Activated CD8-positive, alpha-beta T cell treated with anti-CD3 and anti-CD28 coated beads for 36 hours (primary cell): ENCODE measurements at regions of chr12 and their contacts with region 1.

Region 1: GRCh38 chr12:111396726-111397445 is 8.8 kb upstream of the SH2B3 start:
- DNase-seq: peak; percentile 89
- ATAC-seq: peak; percentile 75
- H3K4me3 Mint-ChIP-seq: peak overlapping the region; percentile 70
- H3K27ac Mint-ChIP-seq: peak overlapping the region; percentile 87
- H3K4me1 Mint-ChIP-seq: peaks cover 36% of the 10 kb centered on the region
- H3K27me3 Mint-ChIP-seq: no peaks in the 10 kb centered on the region
- CTCF ChIP-seq: peak; percentile 99

Region 2: DNA sequence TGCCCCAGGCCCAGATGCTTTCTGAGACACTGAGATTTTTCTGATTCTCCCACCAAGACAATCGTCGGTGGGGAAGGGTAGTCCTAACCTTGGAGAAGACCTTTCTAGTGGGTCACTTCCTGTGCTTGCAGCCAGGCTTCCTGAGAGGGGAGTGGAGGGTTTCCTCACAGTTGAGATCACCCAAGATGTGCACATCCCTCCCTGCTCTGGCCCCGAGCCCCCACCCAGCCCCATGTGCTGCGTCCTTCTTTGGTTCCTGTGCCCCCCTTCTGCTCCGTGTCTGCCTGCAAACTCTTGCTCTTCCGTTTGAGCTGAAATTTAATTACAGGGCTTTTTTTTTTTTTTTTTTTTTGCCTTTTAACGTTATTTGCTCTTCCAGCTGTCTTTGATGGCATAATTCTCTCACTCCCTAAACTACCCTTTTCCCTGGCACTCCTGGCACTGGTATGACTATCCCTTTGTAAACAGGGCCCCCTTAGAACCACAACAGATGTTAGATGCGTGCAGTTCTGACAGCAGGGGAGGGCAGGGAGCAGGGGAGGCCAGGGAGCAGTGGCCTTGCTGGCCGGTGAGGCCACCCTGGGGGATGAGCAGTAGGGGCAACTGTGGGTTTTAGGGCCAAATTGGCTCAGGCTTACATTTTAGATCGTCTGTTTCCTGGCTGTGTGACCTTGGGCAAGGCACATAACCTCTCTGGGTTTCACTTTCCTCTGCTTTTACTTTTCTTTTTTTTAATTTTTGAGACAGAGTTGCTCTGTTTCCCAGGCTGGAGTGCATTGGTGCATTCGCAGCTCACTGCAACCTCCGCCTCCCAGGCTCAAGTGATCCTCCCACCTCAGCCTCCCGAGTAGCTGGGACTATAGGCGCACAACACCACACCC is 172.5 kb before region 1 on chr12:
- CTCF ChIA-PET with region 1: no interaction called
- POLR2A ChIA-PET with region 1: no interaction called
- intact Hi-C with region 1: no loop called
- DNase-seq: no peak
- ATAC-seq: no peak
- H3K4me3 Mint-ChIP-seq: no peak overlapping the region
- H3K27ac Mint-ChIP-seq: no peak overlapping the region
- H3K4me1 Mint-ChIP-seq: no peaks in the 10 kb centered on the region
- H3K27me3 Mint-ChIP-seq: no peaks in the 10 kb centered on the region
- CTCF ChIP-seq: no peak

Region 3: GRCh38 chr12:111330800-111331752 is 65.8 kb before region 1 on chr12:
- CTCF ChIA-PET with region 1: interaction called, 15 read pairs
- POLR2A ChIA-PET with region 1: no interaction called
- intact Hi-C with region 1: no loop called
- DNase-seq: no peak
- ATAC-seq: peak; percentile 68
- H3K4me3 Mint-ChIP-seq: no peak overlapping the region
- H3K27ac Mint-ChIP-seq: no peak overlapping the region
- H3K4me1 Mint-ChIP-seq: no peaks in the 10 kb centered on the region
- H3K27me3 Mint-ChIP-seq: peaks cover 7% of the 10 kb centered on the region
- CTCF ChIP-seq: peak; percentile 61

Region 4: DNA sequence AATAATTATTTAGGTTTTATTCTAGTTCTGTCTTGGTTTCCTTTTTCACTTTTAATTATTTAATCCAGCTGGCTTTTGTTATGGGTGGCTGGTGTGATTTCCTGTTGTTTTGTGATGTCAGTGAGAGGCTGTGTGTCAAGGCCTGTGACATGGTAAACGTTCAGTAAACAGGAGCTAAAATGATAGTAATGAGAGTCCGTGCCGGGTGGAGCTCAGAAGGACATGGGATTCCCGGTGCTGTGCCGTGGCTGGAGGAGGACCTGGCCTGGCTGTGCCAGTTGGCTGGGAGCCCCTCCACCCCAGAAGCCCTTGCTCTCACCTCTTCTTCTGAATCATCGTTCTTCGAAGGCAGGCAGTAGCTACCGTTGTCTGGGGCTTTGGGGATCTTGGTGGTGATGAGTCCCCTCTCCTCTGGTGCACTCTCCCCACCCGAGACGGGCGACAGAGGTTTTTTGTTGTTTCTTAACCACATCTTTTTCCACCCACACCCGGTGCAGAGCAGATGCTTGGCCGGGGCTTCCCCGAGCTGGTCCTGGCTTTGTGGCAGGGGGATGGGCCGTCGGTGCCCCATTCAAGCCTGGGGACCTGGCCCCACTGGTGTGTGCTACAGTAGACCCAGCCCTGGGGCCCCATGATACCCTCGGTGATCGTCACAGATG is 37.9 kb after region 1 on chr12:
- CTCF ChIA-PET with region 1: interaction called, 1,222 read pairs
- POLR2A ChIA-PET with region 1: interaction called, 89 read pairs
- intact Hi-C with region 1: loop called (anchors 5 kb)
- DNase-seq: peak; percentile 94
- ATAC-seq: peak; percentile 73
- H3K4me3 Mint-ChIP-seq: peak overlapping the region; percentile 62
- H3K27ac Mint-ChIP-seq: peak overlapping the region; percentile 95
- H3K4me1 Mint-ChIP-seq: peaks cover 86% of the 10 kb centered on the region
- H3K27me3 Mint-ChIP-seq: no peaks in the 10 kb centered on the region
- CTCF ChIP-seq: no peak

Region 5: GRCh38 chr12:111462210-111462769 is 65.4 kb after region 1 on chr12:
- CTCF ChIA-PET with region 1: interaction called, 1,222 read pairs
- POLR2A ChIA-PET with region 1: interaction called, 4 read pairs
- intact Hi-C with region 1: no loop called
- DNase-seq: no peak
- ATAC-seq: no peak
- H3K4me3 Mint-ChIP-seq: no peak overlapping the region
- H3K27ac Mint-ChIP-seq: no peak overlapping the region
- H3K4me1 Mint-ChIP-seq: peaks cover 1% of the 10 kb centered on the region
- H3K27me3 Mint-ChIP-seq: no peaks in the 10 kb centered on the region
- CTCF ChIP-seq: no peak

Region 6: GRCh38 chr12:111488271-111488670 is 91.4 kb after region 1 on chr12:
- CTCF ChIA-PET with region 1: interaction called, 14 read pairs
- POLR2A ChIA-PET with region 1: no interaction called
- intact Hi-C with region 1: no loop called
- DNase-seq: no peak
- ATAC-seq: no peak
- H3K4me3 Mint-ChIP-seq: no peak overlapping the region
- H3K27ac Mint-ChIP-seq: no peak overlapping the region
- H3K4me1 Mint-ChIP-seq: no peaks in the 10 kb centered on the region
- H3K27me3 Mint-ChIP-seq: no peaks in the 10 kb centered on the region
- CTCF ChIP-seq: no peak

Region 7: GRCh38 chr12:111529424-111530368 is 132.8 kb after region 1 on chr12:
- CTCF ChIA-PET with region 1: interaction called, 69 read pairs
- POLR2A ChIA-PET with region 1: interaction called, 4 read pairs
- intact Hi-C with region 1: loop called (anchors 5 kb)
- DNase-seq: peak; percentile 72
- ATAC-seq: peak; percentile 94
- H3K4me3 Mint-ChIP-seq: no peak overlapping the region
- H3K27ac Mint-ChIP-seq: peak overlapping the region; percentile 1
- H3K4me1 Mint-ChIP-seq: peaks cover 12% of the 10 kb centered on the region
- H3K27me3 Mint-ChIP-seq: no peaks in the 10 kb centered on the region
- CTCF ChIP-seq: peak; percentile 77